Adrenal gland (tissue), 19 donors: ENCODE measurements at regions of chr10 and their contacts with region 1.

Region 1: DNA sequence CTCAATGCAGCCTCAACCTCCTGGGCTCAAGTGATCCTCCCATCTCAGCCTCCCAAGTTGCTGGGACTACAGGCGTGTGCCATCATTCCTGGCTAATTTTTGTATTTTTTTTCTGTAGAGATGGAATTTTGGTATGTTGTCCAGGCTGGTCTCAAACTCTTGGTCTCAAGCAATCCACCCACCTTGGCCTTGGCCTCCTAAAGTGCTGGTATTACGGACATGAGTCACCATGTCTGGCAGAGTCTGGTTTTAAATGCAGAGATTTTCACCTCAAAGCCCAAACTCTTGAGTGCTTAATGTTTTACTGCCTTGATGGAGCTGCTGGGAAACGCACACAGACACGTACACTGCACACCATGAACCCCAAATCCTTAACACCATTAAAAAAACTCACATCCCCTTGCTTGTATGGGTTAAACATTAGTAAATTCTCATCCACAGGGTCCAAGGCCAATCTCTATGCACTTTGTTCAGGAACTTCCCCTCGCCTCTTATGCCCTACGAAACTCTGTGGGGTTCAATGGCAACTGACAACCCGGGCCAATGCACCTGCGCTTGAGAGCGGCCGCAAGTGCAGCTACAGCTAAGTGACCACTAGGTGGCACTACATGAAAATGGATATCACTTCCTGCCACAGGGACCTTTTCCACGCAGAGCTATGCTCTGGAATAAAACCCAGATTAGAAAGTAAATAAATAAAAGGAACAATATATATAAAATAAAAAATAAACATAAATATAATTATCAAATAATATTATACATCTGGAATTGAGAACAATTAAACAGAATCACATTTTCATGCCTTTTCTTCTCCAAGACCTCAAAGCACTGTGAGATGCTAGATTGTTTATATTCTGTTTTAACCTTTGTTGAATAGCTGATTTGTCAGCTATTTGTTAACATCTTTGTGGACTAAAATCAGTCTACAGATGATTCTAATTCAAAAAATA is 66.9 kb upstream of the AFAP1L2 start:
- DNase-seq: peak; percentile 58 to 86 (median 73)
- H3K4me3 ChIP-seq: no peak overlapping the region
- H3K27ac ChIP-seq: peak overlapping the region in 3 of 5 donors; percentile 1 to 5 (median 4)
- H3K4me1 ChIP-seq: peaks cover 7 to 13% of the 10 kb centered on the region in 2 donors
- H3K27me3 ChIP-seq: no peaks in the 10 kb centered on the region
- CTCF ChIP-seq: peak; percentile 73 to 91 (median 88)
- POLR2A ChIP-seq: no peak

Region 2: GRCh38 chr10:114538181-114538906 is 67.1 kb after region 1 on chr10:
- intact Hi-C with region 1: no loop called
- DNase-seq: peak in 1 of 7 donors; percentile 49
- H3K4me3 ChIP-seq: no peak overlapping the region
- H3K27ac ChIP-seq: peak overlapping the region in 1 of 5 donors; percentile 12
- H3K4me1 ChIP-seq: peaks cover 4 to 10% of the 10 kb centered on the region in 2 donors
- H3K27me3 ChIP-seq: no peaks in the 10 kb centered on the region
- CTCF ChIP-seq: no peak
- POLR2A ChIP-seq: no peak

Region 3: GRCh38 chr10:114550756-114551635 is 79.8 kb after region 1 on chr10:
- intact Hi-C with region 1: loop called (anchors 5 kb)
- DNase-seq: peak; percentile 30 to 78 (median 60)
- H3K4me3 ChIP-seq: no peak overlapping the region
- H3K27ac ChIP-seq: peak overlapping the region in 4 of 5 donors; percentile 64 to 89 (median 70)
- H3K4me1 ChIP-seq: peaks cover 12 to 28% of the 10 kb centered on the region in 2 donors
- H3K27me3 ChIP-seq: no peaks in the 10 kb centered on the region
- CTCF ChIP-seq: peak; percentile 33 to 71 (median 54)
- POLR2A ChIP-seq: no peak

Region 4: DNA sequence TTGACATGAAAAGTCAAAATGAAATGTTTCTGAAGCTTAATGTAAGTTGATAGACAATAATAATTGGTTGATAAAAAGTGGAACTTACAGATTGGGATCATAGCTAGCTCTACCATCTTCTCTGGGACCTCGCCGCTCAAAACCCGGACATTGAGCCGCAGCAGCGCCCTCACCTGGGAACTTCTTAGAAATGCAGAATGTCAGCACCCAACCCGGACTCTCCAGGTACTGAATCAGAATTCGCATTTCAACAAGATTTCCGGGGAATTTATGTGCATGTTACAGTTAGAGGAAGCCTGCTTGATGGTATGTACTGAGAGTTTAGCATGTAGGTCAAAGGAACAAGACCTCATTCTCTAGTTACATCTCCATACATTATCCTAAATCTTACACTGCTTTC is 223.5 kb after region 1 on chr10:
- intact Hi-C with region 1: loop called in 1 of 2 experiments (anchors 10 kb)
- DNase-seq: peak in 3 of 7 donors; percentile 46 to 57 (median 49)
- H3K4me3 ChIP-seq: no peak overlapping the region
- H3K27ac ChIP-seq: no peak overlapping the region
- H3K4me1 ChIP-seq: peaks cover 28 to 35% of the 10 kb centered on the region in 2 donors
- H3K27me3 ChIP-seq: no peaks in the 10 kb centered on the region
- CTCF ChIP-seq: peak; percentile 24 to 54 (median 46)
- POLR2A ChIP-seq: no peak

Region 5: DNA sequence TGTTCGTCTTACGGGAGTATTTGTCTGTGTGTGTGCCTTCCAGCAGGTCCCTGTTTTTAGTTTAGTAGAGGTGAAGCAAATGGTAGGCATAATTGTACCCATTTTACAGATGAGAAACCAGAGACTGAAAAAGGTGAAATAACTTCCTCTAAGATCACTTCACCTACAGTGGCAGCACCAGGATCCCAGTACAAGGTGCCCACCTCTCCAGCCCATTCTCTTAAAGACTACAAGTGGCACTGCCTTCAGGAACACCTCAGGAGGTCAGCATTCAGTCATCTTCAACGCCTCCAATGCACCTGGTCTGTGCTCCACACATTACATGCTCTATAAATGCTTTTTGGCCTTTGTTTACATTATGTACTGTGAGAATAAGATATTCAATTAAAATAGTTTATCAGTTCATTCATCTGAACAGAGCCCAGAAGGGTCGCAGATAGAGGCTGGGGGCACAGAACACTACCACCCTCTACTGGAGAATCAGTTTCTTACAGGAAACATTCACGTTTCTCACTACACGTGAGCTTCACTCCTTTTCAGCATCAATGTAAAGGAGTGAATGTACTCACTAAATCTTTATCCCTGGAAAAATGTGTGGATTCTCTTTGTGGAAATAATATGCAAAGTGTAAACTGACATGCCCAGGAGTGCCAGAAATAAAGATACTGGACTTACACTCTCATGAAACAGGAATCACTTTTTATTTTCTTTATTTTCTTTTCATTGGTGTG is 232.3 kb after region 1 on chr10:
- intact Hi-C with region 1: loop called (anchors 10 kb)
- DNase-seq: peak in 1 of 7 donors; percentile 30
- H3K4me3 ChIP-seq: no peak overlapping the region
- H3K27ac ChIP-seq: no peak overlapping the region
- H3K4me1 ChIP-seq: peaks cover 3 to 15% of the 10 kb centered on the region in 2 donors
- H3K27me3 ChIP-seq: no peaks in the 10 kb centered on the region
- CTCF ChIP-seq: peak; percentile 48 to 84 (median 71)
- POLR2A ChIP-seq: no peak

Region 6: DNA sequence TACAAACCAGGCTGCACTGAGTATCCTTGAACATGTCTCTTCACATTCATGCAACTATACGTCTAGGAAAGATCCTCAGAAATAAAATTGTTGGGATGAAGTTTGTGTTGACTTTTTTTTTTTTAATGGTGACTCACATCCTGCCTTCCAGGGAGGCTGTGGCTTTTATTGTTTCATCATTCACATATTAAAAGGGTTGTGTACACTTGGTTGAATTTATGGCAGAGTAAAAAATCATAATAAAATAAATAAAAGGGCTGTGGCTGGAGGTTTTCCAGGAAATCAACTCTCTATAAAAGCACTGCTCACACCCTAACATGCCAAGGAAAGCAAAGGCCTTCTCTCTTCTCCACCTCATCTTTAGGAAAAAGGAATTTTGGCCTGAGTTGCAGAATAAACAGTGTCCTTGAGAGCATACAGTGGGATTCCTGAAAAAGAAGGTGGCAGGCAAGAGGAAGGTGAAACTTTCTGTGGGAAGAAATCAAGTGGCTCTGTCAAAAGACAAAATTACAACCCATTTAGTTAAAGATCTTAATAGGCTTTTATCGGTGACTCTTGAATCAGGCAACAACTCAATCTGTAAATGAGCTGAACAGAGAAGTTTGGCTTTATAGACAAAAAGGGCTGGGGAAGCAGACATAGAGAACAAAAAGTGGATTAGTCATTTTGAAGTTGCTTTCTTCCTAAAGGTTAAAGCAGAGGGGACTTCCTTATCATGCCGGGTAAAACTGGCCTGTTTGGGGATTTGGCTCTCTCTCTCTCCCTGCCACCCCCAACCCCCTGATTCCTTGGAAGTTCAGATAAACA is 308.8 kb after region 1 on chr10:
- intact Hi-C with region 1: loop called in 1 of 2 experiments (anchors 10 kb)
- DNase-seq: no peak
- H3K4me3 ChIP-seq: no peak overlapping the region
- H3K27ac ChIP-seq: peak overlapping the region in 3 of 5 donors; percentile 19 to 44 (median 36)
- H3K4me1 ChIP-seq: peaks cover 8 to 16% of the 10 kb centered on the region in 2 donors
- H3K27me3 ChIP-seq: no peaks in the 10 kb centered on the region
- CTCF ChIP-seq: no peak
- POLR2A ChIP-seq: no peak

Region 7: GRCh38 chr10:114937962-114938855 is 467.0 kb after region 1 on chr10 and contains the start of gene TRUB1:
- intact Hi-C with region 1: no loop called
- DNase-seq: peak; percentile 93 to 99 (median 97)
- H3K4me3 ChIP-seq: peak within 1 kb of the TSS; percentile 48 to 97 (median 84)
- H3K27ac ChIP-seq: peak within 1 kb of the TSS; percentile 44 to 93 (median 88)
- H3K4me1 ChIP-seq: peaks cover 14 to 30% of the 10 kb centered on the region in 2 donors
- H3K27me3 ChIP-seq: no peaks in the 10 kb centered on the region
- CTCF ChIP-seq: no peak
- POLR2A ChIP-seq: peak in 1 of 2 donors; percentile 85
- total RNA-seq, gene TRUB1: 12.6 to 106 (median 52.8) TPM

Region 8: DNA sequence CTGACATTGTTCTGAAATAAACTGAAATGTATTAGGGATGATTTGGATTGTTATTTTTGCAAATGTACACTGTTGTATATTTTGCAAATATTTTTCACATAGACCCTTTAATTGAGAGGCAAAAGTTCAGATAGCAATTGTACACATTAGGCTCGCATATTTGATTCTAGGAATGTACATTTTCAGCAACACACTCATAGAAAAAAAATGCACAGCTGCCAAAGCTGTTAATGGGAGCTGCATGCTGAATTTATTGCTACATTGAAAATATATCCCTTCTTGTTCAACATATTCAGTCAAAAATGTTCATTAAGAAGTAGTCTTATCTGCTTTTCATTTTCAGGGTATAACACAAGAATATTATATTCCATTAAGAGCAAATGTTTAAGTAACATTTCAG is 1134.9 kb after region 1 on chr10:
- intact Hi-C with region 1: no loop called
- DNase-seq: no peak
- H3K4me3 ChIP-seq: no peak overlapping the region
- H3K27ac ChIP-seq: no peak overlapping the region
- H3K4me1 ChIP-seq: no peaks in the 10 kb centered on the region
- H3K27me3 ChIP-seq: no peaks in the 10 kb centered on the region
- CTCF ChIP-seq: no peak
- POLR2A ChIP-seq: no peak